ENCODE measurements at regions of chr10 and their contacts with region 1.

Region 1: GRCh38 chr10:67837541-67838314 is at the start of gene DNAJC12:
- DNase-seq: peak; percentile 74
- ATAC-seq: peak; percentile 99
- H3K4me3 ChIP-seq: peak within 1 kb of the TSS; percentile 58 to 73 (median 66)
- H3K27ac ChIP-seq: peak within 1 kb of the TSS; percentile 59
- H3K4me1 ChIP-seq: peaks cover 32% of the 10 kb centered on the region
- H3K27me3 ChIP-seq: no peaks in the 10 kb centered on the region
- CTCF ChIP-seq: peak; percentile 36; the same call in 1 of the 2 replicates
- EP300 ChIP-seq: no peak
- POLR2A ChIP-seq: peak in 1 of 2 experiments; percentile 66; a peak in 2 of 4 replicates
- RAD21 ChIP-seq: no peak
- total RNA-seq, gene DNAJC12: 11.6 and 14.4 TPM in 2 replicates

Region 2: GRCh38 chr10:67788025-67788886 is 49.5 kb before region 1 on chr10:
- CTCF ChIA-PET with region 1: no interaction called
- POLR2A ChIA-PET with region 1: interaction called, 10 read pairs
- in situ Hi-C with region 1: no loop called
- intact Hi-C with region 1: no loop called
- DNase-seq: peak; percentile 42
- ATAC-seq: peak; percentile 95
- H3K4me3 ChIP-seq: peak overlapping the region in 1 of 3 experiments; percentile 49; a peak in 4 of 6 replicates
- H3K27ac ChIP-seq: no peak overlapping the region
- H3K4me1 ChIP-seq: peaks cover 28% of the 10 kb centered on the region
- H3K27me3 ChIP-seq: no peaks in the 10 kb centered on the region
- CTCF ChIP-seq: peak; percentile 96
- EP300 ChIP-seq: no peak
- POLR2A ChIP-seq: no peak
- RAD21 ChIP-seq: peak; percentile 82

Measured in HepG2 (cell line).